Activated CD4-positive, alpha-beta memory T cell treated with anti-CD3 and anti-CD28 coated beads, Interleukin-2, amount 10 ng/mL, durations not matched to agents 7 days and 5 days (primary cell): ENCODE measurements at regions of chr14 and their contacts with region 1.

Region 1: DNA sequence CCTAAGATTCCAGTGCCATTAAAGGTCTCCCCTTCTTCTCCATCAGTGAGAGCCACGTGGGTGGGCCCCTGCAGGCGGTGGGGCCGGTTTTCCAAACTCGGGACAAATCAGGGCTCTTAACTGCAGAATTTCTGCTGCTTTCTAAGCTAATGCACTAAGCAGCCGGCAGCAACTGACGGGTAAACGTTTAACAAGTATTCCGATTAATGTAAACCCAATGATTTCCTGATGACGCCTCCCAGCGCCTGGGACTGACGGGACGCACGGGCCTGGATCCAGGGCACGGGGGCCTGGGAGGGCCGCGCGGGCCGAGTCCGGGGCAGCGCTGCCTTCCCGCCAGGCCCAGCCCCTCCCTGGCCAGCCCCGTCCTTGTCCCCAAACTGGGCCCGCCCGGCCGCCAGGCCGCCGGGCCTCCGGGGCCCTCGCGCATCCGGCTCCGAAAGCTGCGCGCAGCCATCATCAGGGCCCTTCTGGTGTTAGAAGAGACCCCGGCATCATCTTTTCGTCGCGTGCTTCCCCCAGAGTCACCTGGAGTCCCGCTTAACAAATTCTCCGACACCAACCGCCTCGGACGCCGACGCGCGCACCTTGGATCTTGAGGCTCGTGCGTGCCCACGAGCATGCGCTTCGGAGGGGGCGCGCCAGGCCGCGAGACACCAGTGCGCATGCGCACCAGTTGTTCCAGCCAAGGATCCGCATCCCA is at the start of gene MLH3:
- DNase-seq: peak; percentile 79
- H3K4me3 Mint-ChIP-seq: peak within 1 kb of the TSS; percentile 84
- H3K27ac Mint-ChIP-seq: peak within 1 kb of the TSS; percentile 73
- H3K4me1 Mint-ChIP-seq: peaks cover 68% of the 10 kb centered on the region
- H3K27me3 Mint-ChIP-seq: no peaks in the 10 kb centered on the region
- total RNA-seq, gene MLH3: 16.0 to 16.6 TPM

Region 2: DNA sequence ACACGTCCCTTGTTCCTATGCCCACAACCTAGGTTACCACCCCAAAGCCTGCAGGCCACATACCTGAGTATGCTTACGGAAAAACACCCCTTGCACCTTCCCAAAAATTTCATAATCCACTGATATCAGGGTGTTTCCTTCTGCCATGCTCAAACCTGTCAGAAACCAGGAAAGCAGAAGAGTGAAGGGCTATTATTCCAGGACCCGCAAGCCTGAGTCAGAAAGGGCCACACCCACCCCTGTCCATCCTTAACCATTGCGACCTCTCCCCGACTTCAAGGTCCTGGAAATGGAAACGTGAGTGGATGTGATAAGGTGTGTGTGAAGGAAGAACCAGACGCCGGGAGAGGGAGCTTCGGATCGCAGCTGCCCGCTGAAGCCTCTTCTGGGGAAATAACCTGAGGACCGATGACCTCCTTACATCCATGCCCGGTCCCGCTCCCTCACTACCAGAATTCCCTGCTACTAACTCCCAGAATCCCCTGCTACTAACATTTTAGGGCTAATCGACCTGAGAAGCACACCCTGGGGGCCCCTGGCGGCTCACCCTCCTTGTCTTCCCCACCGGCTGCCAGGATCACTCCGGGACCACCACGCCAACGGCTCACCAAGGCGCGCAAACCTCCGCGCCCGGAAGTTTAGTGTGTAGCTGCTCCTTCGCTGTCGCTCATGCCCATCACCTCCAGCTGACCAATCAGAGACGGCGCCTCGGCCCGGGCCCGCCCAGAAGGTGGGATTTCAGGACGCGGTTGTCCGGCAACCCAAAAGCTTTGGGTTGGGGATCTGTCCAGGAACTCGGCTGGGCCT is 12.6 kb after region 1 on chr14 and contains the start of gene ACYP1:
- CTCF ChIA-PET with region 1: interaction called, 13 read pairs
- POLR2A ChIA-PET with region 1: interaction called, 18 read pairs
- DNase-seq: peak; percentile 93
- H3K4me3 Mint-ChIP-seq: peak within 1 kb of the TSS; percentile 99
- H3K27ac Mint-ChIP-seq: peak within 1 kb of the TSS; percentile 92
- H3K4me1 Mint-ChIP-seq: peaks cover 42% of the 10 kb centered on the region
- H3K27me3 Mint-ChIP-seq: no peaks in the 10 kb centered on the region
- total RNA-seq, gene ACYP1: 52.7 to 53.8 TPM

Region 3: GRCh38 chr14:75069045-75069810 is 18.2 kb after region 1 on chr14 and contains the start of gene ZC2HC1C:
- CTCF ChIA-PET with region 1: interaction called, 13 read pairs
- POLR2A ChIA-PET with region 1: interaction called, 18 read pairs
- DNase-seq: peak; percentile 73
- H3K4me3 Mint-ChIP-seq: peak within 1 kb of the TSS; percentile 22
- H3K27ac Mint-ChIP-seq: no peak within 1 kb of the TSS
- H3K4me1 Mint-ChIP-seq: peaks cover 17% of the 10 kb centered on the region
- H3K27me3 Mint-ChIP-seq: no peaks in the 10 kb centered on the region
- total RNA-seq, gene ZC2HC1C: 2.0 to 2.4 TPM

Region 4: GRCh38 chr14:75340921-75341320 is 289.9 kb after region 1 on chr14:
- CTCF ChIA-PET with region 1: no interaction called
- POLR2A ChIA-PET with region 1: no interaction called
- DNase-seq: no peak
- H3K4me3 Mint-ChIP-seq: no peak overlapping the region
- H3K27ac Mint-ChIP-seq: no peak overlapping the region
- H3K4me1 Mint-ChIP-seq: no peaks in the 10 kb centered on the region
- H3K27me3 Mint-ChIP-seq: peaks cover 13% of the 10 kb centered on the region